CD4-positive, alpha-beta T cell (primary cell): ENCODE measurements at regions of chr14 and their contacts with region 1.

Region 1: DNA sequence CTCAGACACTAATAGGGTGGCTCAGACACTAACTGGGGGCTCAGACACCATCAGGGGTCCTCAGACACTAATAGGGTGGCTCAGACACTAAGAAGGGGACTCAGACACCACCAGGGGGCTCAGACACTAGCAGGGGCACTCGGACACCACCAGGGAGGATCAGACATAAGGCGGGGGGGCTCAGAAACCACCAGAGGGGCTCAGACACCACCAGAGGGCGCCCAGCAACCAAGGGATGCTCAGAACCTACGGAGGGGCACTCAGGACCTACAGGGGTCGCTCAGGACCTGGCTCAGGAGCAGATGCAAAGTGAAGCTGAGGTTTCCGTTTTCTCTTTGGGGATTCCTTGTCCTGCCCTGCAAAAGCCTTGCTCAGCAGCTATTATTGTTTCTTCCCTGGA is 448.5 kb downstream of the TMEM121 start:
- DNase-seq: peak; percentile 45 to 86 (median 60)
- ATAC-seq: peak; percentile 73
- H3K4me3 ChIP-seq: no peak overlapping the region
- H3K4me3 Mint-ChIP-seq: no peak overlapping the region
- H3K27ac ChIP-seq: no peak overlapping the region
- H3K27ac Mint-ChIP-seq: no peak overlapping the region
- H3K4me1 ChIP-seq: peaks cover 7% of the 10 kb centered on the region
- H3K4me1 Mint-ChIP-seq: peaks cover 18% of the 10 kb centered on the region
- H3K27me3 ChIP-seq: no peaks in the 10 kb centered on the region
- H3K27me3 Mint-ChIP-seq: peaks cover 6% of the 10 kb centered on the region
- CTCF ChIP-seq: peak; percentile 75

Region 2: DNA sequence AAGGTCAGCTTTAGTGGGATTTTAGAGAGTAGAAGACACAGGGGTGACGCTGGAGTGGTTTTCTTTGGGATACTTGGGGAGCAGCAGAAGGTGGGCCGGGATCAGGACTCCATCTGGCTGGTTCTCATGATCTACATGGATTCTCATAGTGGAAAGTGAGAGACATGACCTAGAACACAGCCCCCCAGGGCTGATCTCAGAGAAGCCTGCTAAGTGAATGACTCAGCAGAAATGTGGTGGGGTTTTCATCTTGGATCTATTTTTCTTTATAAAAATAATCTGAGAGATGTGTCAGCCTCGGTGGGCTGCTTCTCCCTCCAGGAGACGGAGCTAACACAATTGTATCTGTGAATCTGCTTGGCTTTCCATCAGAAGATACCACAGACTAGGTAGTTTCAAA is 35.9 kb after region 1 on chr14:
- CTCF ChIA-PET with region 1: no interaction called
- POLR2A ChIA-PET with region 1: interaction called, 5 read pairs
- intact Hi-C with region 1: loop called (anchors 1 to 2 kb)
- DNase-seq: no peak
- ATAC-seq: no peak
- H3K4me3 ChIP-seq: no peak overlapping the region
- H3K4me3 Mint-ChIP-seq: no peak overlapping the region
- H3K27ac ChIP-seq: no peak overlapping the region
- H3K27ac Mint-ChIP-seq: no peak overlapping the region
- H3K4me1 ChIP-seq: peaks cover 31% of the 10 kb centered on the region
- H3K4me1 Mint-ChIP-seq: peaks cover 44% of the 10 kb centered on the region
- H3K27me3 ChIP-seq: no peaks in the 10 kb centered on the region
- H3K27me3 Mint-ChIP-seq: no peaks in the 10 kb centered on the region
- CTCF ChIP-seq: no peak

Region 3: DNA sequence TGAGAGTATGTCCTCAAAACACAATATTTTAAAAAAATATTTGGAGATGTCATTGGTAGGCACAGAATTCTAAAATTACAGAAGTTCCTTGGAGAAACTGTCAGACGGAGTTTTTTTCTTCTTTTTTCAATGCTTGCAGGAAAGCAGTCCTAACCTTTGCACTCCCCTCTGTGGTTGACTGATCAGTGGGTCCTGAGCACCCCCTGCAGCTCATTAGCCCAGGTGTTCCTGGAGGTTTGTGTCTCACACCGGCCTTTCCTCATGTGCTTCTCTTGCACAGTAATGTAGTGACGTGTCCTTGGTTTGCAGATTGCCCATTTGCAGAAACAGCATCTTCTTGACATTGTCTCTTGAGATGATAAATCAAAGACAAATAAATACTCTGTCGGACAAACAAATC is 64.5 kb after region 1 on chr14:
- CTCF ChIA-PET with region 1: no interaction called
- POLR2A ChIA-PET with region 1: no interaction called
- intact Hi-C with region 1: loop called in 1 of 2 experiments (anchors 1 kb)
- DNase-seq: peak; percentile 36 to 78 (median 52)
- ATAC-seq: peak; percentile 82
- H3K4me3 ChIP-seq: no peak overlapping the region
- H3K4me3 Mint-ChIP-seq: no peak overlapping the region
- H3K27ac ChIP-seq: no peak overlapping the region
- H3K27ac Mint-ChIP-seq: no peak overlapping the region
- H3K4me1 ChIP-seq: no peaks in the 10 kb centered on the region
- H3K4me1 Mint-ChIP-seq: no peaks in the 10 kb centered on the region
- H3K27me3 ChIP-seq: peaks cover 0 to 3% of the 10 kb centered on the region in 2 experiments
- H3K27me3 Mint-ChIP-seq: no peaks in the 10 kb centered on the region
- CTCF ChIP-seq: peak; percentile 58

Region 4: GRCh38 chr14:106062502-106063272 is 87.8 kb after region 1 on chr14:
- CTCF ChIA-PET with region 1: interaction called, 3 read pairs
- POLR2A ChIA-PET with region 1: no interaction called
- intact Hi-C with region 1: loop called in 1 of 2 experiments (anchors 10 kb)
- DNase-seq: peak in 1 of 14 experiments; percentile 13
- ATAC-seq: no peak
- H3K4me3 ChIP-seq: no peak overlapping the region
- H3K4me3 Mint-ChIP-seq: no peak overlapping the region
- H3K27ac ChIP-seq: no peak overlapping the region
- H3K27ac Mint-ChIP-seq: no peak overlapping the region
- H3K4me1 ChIP-seq: peaks cover 17% of the 10 kb centered on the region
- H3K4me1 Mint-ChIP-seq: peaks cover 17% of the 10 kb centered on the region
- H3K27me3 ChIP-seq: peaks cover 3 to 4% of the 10 kb centered on the region in 2 experiments
- H3K27me3 Mint-ChIP-seq: peaks cover 12% of the 10 kb centered on the region
- CTCF ChIP-seq: no peak

Region 5: GRCh38 chr14:106248321-106249192 is 273.7 kb after region 1 on chr14:
- CTCF ChIA-PET with region 1: no interaction called
- POLR2A ChIA-PET with region 1: no interaction called
- intact Hi-C with region 1: no loop called
- DNase-seq: no peak
- ATAC-seq: no peak
- H3K4me3 ChIP-seq: no peak overlapping the region
- H3K4me3 Mint-ChIP-seq: no peak overlapping the region
- H3K27ac ChIP-seq: no peak overlapping the region
- H3K27ac Mint-ChIP-seq: no peak overlapping the region
- H3K4me1 ChIP-seq: no peaks in the 10 kb centered on the region
- H3K4me1 Mint-ChIP-seq: peaks cover 7% of the 10 kb centered on the region
- H3K27me3 ChIP-seq: no peaks in the 10 kb centered on the region
- H3K27me3 Mint-ChIP-seq: peaks cover 30% of the 10 kb centered on the region
- CTCF ChIP-seq: no peak